ENCODE measurements at regions of chr18 and their contacts with region 1.

Region 1: GRCh38 chr18:29616867-29617266 is 1425.7 kb downstream of the DSC3 start:
- DNase-seq: no peak
- H3K4me3 Mint-ChIP-seq: no peak overlapping the region
- H3K27ac Mint-ChIP-seq: no peak overlapping the region
- H3K4me1 Mint-ChIP-seq: no peaks in the 10 kb centered on the region
- H3K27me3 Mint-ChIP-seq: no peaks in the 10 kb centered on the region

Region 2: DNA sequence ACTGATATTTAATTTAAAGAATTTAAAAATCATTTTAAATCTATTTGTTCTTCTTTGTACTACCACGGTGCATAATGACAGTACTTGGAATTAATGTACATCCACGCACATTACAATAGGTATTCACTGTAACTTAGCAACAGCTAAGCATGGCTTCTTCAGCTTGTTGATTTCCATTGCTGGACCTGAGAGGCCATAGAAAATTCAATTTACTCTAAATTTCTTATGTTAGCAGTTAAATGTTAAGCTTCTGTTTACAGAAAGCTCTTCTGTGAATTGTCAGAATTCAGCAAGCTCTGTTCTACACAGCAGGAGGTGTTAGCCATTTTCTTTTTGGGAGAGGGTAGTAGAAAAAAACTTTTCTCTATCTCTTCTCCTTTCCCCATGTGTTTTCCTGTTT is 290.7 kb before region 1 on chr18:
- CTCF ChIA-PET with region 1: no interaction called
- intact Hi-C with region 1: no loop called
- DNase-seq: no peak
- H3K4me3 Mint-ChIP-seq: no peak overlapping the region
- H3K27ac Mint-ChIP-seq: no peak overlapping the region
- H3K4me1 Mint-ChIP-seq: no peaks in the 10 kb centered on the region
- H3K27me3 Mint-ChIP-seq: no peaks in the 10 kb centered on the region

Region 3: DNA sequence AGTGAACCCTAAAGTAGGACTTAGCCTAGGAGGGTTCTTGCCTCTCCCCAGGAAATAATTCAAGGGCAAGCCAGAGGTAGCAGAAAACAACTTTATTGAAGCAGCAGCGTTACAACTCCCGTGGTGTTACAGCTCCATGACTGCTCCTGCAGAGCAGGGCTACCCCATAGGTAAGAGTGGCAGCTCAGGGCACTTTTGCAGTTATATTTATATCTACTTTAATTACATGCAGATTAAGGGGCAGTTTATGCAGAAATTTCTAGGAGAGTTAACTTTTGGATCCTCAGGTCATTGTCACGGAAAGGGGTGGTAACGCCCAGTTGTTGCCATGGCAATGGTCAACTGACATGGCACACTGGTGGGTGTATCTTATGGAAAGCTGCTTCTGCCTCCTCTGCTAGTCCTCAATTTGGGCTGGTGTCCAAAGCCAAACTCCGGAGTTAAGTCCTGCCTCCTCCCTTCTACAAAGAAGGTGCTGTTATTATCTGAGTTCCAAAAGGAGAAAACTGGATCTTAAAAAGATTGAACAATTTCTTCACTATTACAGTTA is 12.7 kb after region 1 on chr18:
- CTCF ChIA-PET with region 1: no interaction called
- intact Hi-C with region 1: no loop called
- DNase-seq: no peak
- H3K4me3 Mint-ChIP-seq: no peak overlapping the region
- H3K27ac Mint-ChIP-seq: no peak overlapping the region
- H3K4me1 Mint-ChIP-seq: no peaks in the 10 kb centered on the region
- H3K27me3 Mint-ChIP-seq: no peaks in the 10 kb centered on the region

Region 4: GRCh38 chr18:29664278-29665036 is 47.6 kb after region 1 on chr18:
- CTCF ChIA-PET with region 1: no interaction called
- intact Hi-C with region 1: loop called (anchors 5 kb)
- DNase-seq: no peak
- H3K4me3 Mint-ChIP-seq: no peak overlapping the region
- H3K27ac Mint-ChIP-seq: no peak overlapping the region
- H3K4me1 Mint-ChIP-seq: no peaks in the 10 kb centered on the region
- H3K27me3 Mint-ChIP-seq: no peaks in the 10 kb centered on the region

Region 5: DNA sequence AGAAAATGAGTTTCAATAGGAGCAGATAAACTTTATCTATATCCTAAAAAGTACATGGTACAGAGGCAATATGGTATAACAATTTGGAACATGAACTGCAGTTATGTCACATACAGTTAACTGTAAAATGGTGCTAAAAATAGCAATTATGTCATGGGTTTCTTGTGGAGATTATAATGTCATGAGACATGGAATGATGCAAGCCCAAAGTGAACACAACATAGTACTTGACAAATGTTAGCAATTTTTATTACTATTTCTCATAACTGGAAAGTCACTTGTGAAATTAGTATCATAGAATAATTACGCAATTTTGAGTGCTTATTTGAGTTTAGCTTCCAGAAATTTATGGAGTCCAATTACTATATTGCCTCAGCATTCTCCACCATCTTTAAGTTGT is 162.2 kb after region 1 on chr18:
- CTCF ChIA-PET with region 1: no interaction called
- intact Hi-C with region 1: no loop called
- DNase-seq: no peak
- H3K4me3 Mint-ChIP-seq: no peak overlapping the region
- H3K27ac Mint-ChIP-seq: no peak overlapping the region
- H3K4me1 Mint-ChIP-seq: no peaks in the 10 kb centered on the region
- H3K27me3 Mint-ChIP-seq: no peaks in the 10 kb centered on the region